ENCODE measurements at regions of chr3 and their contacts with region 1.

Region 1: GRCh38 chr3:150220799-150221198 is 187.3 kb upstream of the TSC22D2 start:
- DNase-seq: no peak
- ATAC-seq: no peak
- H3K4me3 ChIP-seq: no peak overlapping the region
- H3K4me3 Mint-ChIP-seq: peak overlapping the region in 1 of 3 donors; percentile 64
- H3K27ac ChIP-seq: no peak overlapping the region
- H3K27ac Mint-ChIP-seq: no peak overlapping the region
- H3K4me1 ChIP-seq: peaks cover 0 to 5% of the 10 kb centered on the region in 2 experiments
- H3K4me1 Mint-ChIP-seq: peaks cover 2 to 10% (median 4%) of the 10 kb centered on the region in 3 donors
- H3K27me3 ChIP-seq: peaks cover 7 to 24% of the 10 kb centered on the region in 2 experiments
- H3K27me3 Mint-ChIP-seq: peaks cover 41 to 48% of the 10 kb centered on the region in 2 donors

Region 2: DNA sequence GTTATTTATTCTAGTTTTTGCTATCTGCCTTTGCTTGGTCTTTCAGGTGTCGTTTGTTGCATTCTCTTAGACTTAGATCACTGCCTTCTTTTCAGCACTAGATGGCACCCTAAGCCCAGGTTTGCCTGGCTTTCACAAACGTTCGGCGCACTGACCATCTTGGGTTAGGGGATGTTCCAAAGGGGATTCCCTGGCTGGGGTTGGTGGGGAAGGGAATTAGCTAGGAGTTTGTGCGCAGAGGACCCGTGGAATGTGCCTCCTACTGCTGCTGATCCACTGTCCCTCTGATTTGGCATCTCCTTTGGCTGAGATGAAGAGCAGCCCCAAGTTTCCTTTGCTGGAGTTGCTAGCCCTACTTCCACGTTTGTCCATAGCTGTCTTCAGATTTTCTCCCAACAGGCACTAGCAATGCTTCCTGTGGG is 284.0 kb before region 1 on chr3:
- CTCF ChIA-PET with region 1: interaction called, 4 to 12 read pairs
- POLR2A ChIA-PET with region 1: no interaction called
- DNase-seq: peak in 31 of 35 experiments; percentile 2 to 67 (median 11)
- ATAC-seq: peak in 1 of 4 experiments; percentile 60
- H3K4me3 ChIP-seq: no peak overlapping the region
- H3K4me3 Mint-ChIP-seq: no peak overlapping the region
- H3K27ac ChIP-seq: no peak overlapping the region
- H3K27ac Mint-ChIP-seq: no peak overlapping the region
- H3K4me1 ChIP-seq: peaks cover 0 to 3% of the 10 kb centered on the region in 2 experiments
- H3K4me1 Mint-ChIP-seq: peaks cover 26 to 35% (median 29%) of the 10 kb centered on the region in 3 donors
- H3K27me3 ChIP-seq: no peaks in the 10 kb centered on the region
- H3K27me3 Mint-ChIP-seq: no peaks in the 10 kb centered on the region

Region 3: GRCh38 chr3:149969940-149970715 is 250.7 kb before region 1 on chr3:
- CTCF ChIA-PET with region 1: interaction called, 8 to 12 read pairs
- POLR2A ChIA-PET with region 1: no interaction called
- DNase-seq: peak; percentile 50 to 88 (median 74)
- ATAC-seq: peak; percentile 57 to 63 (median 62)
- H3K4me3 ChIP-seq: peak overlapping the region; percentile 63 to 77
- H3K4me3 Mint-ChIP-seq: peak overlapping the region; percentile 85 to 95 (median 90)
- H3K27ac ChIP-seq: no peak overlapping the region
- H3K27ac Mint-ChIP-seq: peak overlapping the region; percentile 7 to 12
- H3K4me1 ChIP-seq: peaks cover 4 to 10% of the 10 kb centered on the region in 2 experiments
- H3K4me1 Mint-ChIP-seq: peaks cover 21 to 25% (median 24%) of the 10 kb centered on the region in 3 donors
- H3K27me3 ChIP-seq: peaks cover 5 to 10% of the 10 kb centered on the region in 2 experiments
- H3K27me3 Mint-ChIP-seq: peaks cover 16% of the 10 kb centered on the region in 2 donors

Region 4: DNA sequence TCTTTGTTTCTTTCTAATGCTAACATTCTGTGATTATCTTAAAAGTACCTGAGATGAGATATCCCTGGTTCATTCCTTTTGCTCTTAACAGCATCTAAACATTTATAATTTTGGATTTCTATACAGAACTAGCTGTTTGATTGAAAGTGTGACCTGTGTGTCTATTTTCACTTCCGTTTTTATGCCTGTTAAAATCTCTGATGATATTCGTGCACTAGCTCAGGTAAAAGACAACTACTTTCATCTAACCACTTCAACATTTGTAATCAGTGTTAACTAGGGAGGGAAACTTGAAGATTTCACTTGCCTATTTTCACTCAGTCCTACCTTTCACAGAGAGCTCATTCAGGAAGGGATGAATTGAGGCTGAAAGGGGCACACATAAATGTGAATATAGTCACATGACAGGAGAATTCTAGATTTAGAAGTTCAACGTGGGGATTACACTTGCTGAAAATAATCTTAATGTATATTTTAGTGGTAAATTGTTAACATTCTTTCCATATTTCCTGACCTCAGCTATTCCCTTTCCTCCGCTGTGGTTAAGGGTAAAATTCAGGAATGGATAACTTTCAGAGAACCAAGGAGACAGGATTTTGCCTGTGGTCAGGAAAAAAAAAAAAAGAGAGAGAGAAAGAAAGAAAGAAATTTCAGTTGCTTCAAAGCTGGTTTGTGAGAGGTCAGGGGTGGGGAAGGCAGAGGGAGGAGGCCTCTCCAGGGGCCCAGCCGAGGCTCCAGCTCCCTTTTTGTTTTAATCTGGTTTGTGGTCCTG is 27.5 kb after region 1 on chr3:
- CTCF ChIA-PET with region 1: no interaction called
- POLR2A ChIA-PET with region 1: no interaction called
- DNase-seq: no peak
- ATAC-seq: no peak
- H3K4me3 ChIP-seq: no peak overlapping the region
- H3K4me3 Mint-ChIP-seq: no peak overlapping the region
- H3K27ac ChIP-seq: no peak overlapping the region
- H3K27ac Mint-ChIP-seq: no peak overlapping the region
- H3K4me1 ChIP-seq: no peaks in the 10 kb centered on the region
- H3K4me1 Mint-ChIP-seq: no peaks in the 10 kb centered on the region
- H3K27me3 ChIP-seq: peaks cover 0 to 10% of the 10 kb centered on the region in 2 experiments
- H3K27me3 Mint-ChIP-seq: peaks cover 23 to 44% of the 10 kb centered on the region in 2 donors

Measured in T-cell (primary cell).